ENCODE measurements at regions of chr10 and their contacts with region 1.

Region 1: GRCh38 chr10:44974628-44975431 is 3.8 kb downstream of the DEPP1 start:
- DNase-seq: peak in 1 of 2 donors; percentile 88
- H3K4me3 ChIP-seq: peak overlapping the region; percentile 47 to 77
- H3K27ac ChIP-seq: peak overlapping the region; percentile 89 to 91
- H3K4me1 ChIP-seq: peaks cover 13 to 24% of the 10 kb centered on the region in 2 donors
- H3K27me3 ChIP-seq: no peaks in the 10 kb centered on the region
- CTCF ChIP-seq: peak; percentile 94 to 97 (median 97)

Region 2: GRCh38 chr10:43671656-43672531 is 1302.9 kb before region 1 on chr10:
- intact Hi-C with region 1: loop called (anchors 10 kb)
- DNase-seq: peak in 1 of 2 donors; percentile 79
- H3K4me3 ChIP-seq: no peak overlapping the region
- H3K27ac ChIP-seq: no peak overlapping the region
- H3K4me1 ChIP-seq: no peaks in the 10 kb centered on the region
- H3K27me3 ChIP-seq: no peaks in the 10 kb centered on the region
- CTCF ChIP-seq: peak; percentile 73 to 89 (median 80)

Region 3: DNA sequence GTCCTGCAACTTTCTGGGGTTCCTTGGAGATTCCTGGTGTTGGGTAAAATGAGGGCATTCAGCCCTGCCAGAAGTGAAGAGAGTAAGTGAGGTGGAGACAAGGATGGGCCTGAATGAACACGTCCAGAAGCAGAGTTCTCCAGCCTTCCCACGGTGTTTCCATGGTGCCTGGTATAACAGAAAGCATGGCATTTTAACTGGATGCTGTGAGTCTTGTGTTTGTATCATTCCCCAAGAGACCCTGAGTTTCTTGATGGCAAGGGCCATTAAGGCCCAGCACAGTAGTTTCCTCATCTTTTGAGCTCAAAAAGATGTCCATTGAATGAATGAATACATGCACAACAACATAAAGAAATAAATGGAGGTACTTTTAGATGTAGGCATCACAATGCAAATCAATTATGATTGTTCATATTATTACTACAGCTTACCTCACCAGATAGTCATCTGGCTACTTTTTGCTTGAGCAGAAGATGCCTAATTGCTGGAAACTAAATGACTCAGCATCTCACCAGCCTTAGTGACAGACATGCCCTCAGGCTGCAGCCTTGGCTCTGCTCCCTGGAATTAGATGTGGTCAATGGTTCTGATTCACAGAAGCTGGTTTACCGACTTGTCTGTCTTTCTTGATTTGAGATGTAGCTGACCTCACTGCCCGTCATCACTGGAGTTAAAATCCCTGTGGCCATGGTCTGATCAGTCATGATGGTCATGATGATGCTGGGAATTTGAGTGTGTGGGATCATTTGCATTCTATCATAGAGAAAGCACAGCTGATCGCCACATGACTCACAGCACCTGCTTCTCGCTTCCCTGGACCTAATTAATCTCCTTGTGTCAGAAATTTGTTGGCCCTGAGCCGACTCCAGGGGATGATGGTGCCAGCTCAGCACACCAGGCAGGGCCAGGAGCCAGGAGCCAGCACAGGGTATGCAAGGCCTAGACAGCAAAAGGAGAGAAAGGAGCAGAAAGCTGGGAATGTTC is 673.9 kb before region 1 on chr10:
- intact Hi-C with region 1: loop called (anchors 10 kb)
- DNase-seq: no peak
- H3K4me3 ChIP-seq: no peak overlapping the region
- H3K27ac ChIP-seq: no peak overlapping the region
- H3K4me1 ChIP-seq: peaks cover 0 to 7% of the 10 kb centered on the region in 2 donors
- H3K27me3 ChIP-seq: no peaks in the 10 kb centered on the region
- CTCF ChIP-seq: no peak

Region 4: GRCh38 chr10:44932517-44933450 is 42.0 kb before region 1 on chr10:
- intact Hi-C with region 1: loop called (anchors 1 kb)
- DNase-seq: peak; percentile 56 to 96
- H3K4me3 ChIP-seq: no peak overlapping the region
- H3K27ac ChIP-seq: peak overlapping the region in 1 of 2 donors; percentile 7
- H3K4me1 ChIP-seq: peaks cover 4 to 17% of the 10 kb centered on the region in 2 donors
- H3K27me3 ChIP-seq: no peaks in the 10 kb centered on the region
- CTCF ChIP-seq: peak; percentile 91 to 98 (median 97)

Region 5: GRCh38 chr10:45000752-45001380 is 26.0 kb after region 1 on chr10 and contains the start of gene ZNF22:
- intact Hi-C with region 1: loop called (anchors 1 kb)
- DNase-seq: no peak
- H3K4me3 ChIP-seq: peak within 1 kb of the TSS; percentile 74
- H3K27ac ChIP-seq: peak within 1 kb of the TSS; percentile 90 to 93
- H3K4me1 ChIP-seq: peaks cover 3 to 44% of the 10 kb centered on the region in 2 donors
- H3K27me3 ChIP-seq: no peaks in the 10 kb centered on the region
- CTCF ChIP-seq: peak in 1 of 3 experiments; percentile 30
- total RNA-seq, gene ZNF22: 1.6 TPM

Region 6: GRCh38 chr10:45058580-45058979 is 83.8 kb after region 1 on chr10:
- intact Hi-C with region 1: no loop called
- DNase-seq: no peak
- H3K4me3 ChIP-seq: no peak overlapping the region
- H3K27ac ChIP-seq: no peak overlapping the region
- H3K4me1 ChIP-seq: no peaks in the 10 kb centered on the region
- H3K27me3 ChIP-seq: no peaks in the 10 kb centered on the region
- CTCF ChIP-seq: no peak